HepG2 (cell line): ENCODE measurements at regions of chr2 and their contacts with region 1.

Region 1: GRCh38 chr2:210961249-210961648 is 404.9 kb downstream of the CPS1 start:
- DNase-seq: peak; percentile 58
- ATAC-seq: no peak
- H3K4me3 ChIP-seq: no peak overlapping the region
- H3K27ac ChIP-seq: no peak overlapping the region
- H3K4me1 ChIP-seq: peaks cover 70% of the 10 kb centered on the region
- H3K27me3 ChIP-seq: no peaks in the 10 kb centered on the region
- CTCF ChIP-seq: no peak
- EP300 ChIP-seq: 0 out of 4 replicates have a peak, but pooled peaks of 1 of the 2 experiments have one; percentile 39
- POLR2A ChIP-seq: no peak
- RAD21 ChIP-seq: no peak

Region 2: GRCh38 chr2:210541290-210541902 is 419.9 kb before region 1 on chr2:
- CTCF ChIA-PET with region 1: no interaction called
- POLR2A ChIA-PET with region 1: no interaction called
- in situ Hi-C with region 1: no loop called
- intact Hi-C with region 1: loop called (anchors 10 kb)
- DNase-seq: peak; percentile 95
- ATAC-seq: peak; percentile 97
- H3K4me3 ChIP-seq: peak overlapping the region in 2 of 3 experiments; percentile 32; a peak in 2 of 6 replicates
- H3K27ac ChIP-seq: peak overlapping the region; percentile 80
- H3K4me1 ChIP-seq: peaks cover 63% of the 10 kb centered on the region
- H3K27me3 ChIP-seq: no peaks in the 10 kb centered on the region
- CTCF ChIP-seq: 0 out of 2 replicates have a peak, but pooled peaks have one; percentile 9
- EP300 ChIP-seq: peak; percentile 60 to 98; a peak in 3 of 4 replicates
- POLR2A ChIP-seq: peak in 1 of 2 experiments; percentile 40; a peak in 1 of 4 replicates
- RAD21 ChIP-seq: no peak

Region 3: DNA sequence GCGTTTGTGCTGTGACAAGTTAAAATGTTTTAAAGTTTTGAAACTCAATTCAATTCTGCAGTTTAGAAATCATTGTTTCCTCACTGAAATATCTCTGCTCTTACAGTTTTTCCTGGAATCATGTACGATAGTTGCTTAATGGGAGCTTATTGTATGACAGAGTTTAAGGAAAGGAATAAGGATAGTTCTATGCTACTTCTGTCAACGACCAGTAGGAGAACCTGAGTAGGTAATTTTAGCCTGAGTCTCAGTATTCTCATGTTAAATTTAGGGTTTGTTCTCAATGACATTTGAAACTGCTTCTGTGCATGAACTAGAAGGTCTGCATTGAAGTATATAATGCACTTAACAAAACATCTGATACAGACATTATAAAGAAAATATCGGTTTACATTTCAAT is 43.8 kb before region 1 on chr2:
- CTCF ChIA-PET with region 1: no interaction called
- POLR2A ChIA-PET with region 1: no interaction called
- in situ Hi-C with region 1: no loop called
- intact Hi-C with region 1: loop called (anchors 2 kb)
- DNase-seq: no peak
- ATAC-seq: no peak
- H3K4me3 ChIP-seq: no peak overlapping the region
- H3K27ac ChIP-seq: no peak overlapping the region
- H3K4me1 ChIP-seq: peaks cover 22% of the 10 kb centered on the region
- H3K27me3 ChIP-seq: no peaks in the 10 kb centered on the region
- CTCF ChIP-seq: no peak
- EP300 ChIP-seq: no peak
- POLR2A ChIP-seq: no peak
- RAD21 ChIP-seq: no peak

Region 4: GRCh38 chr2:211014376-211014775 is 53.1 kb after region 1 on chr2:
- CTCF ChIA-PET with region 1: no interaction called
- POLR2A ChIA-PET with region 1: no interaction called
- in situ Hi-C with region 1: no loop called
- intact Hi-C with region 1: loop called (anchors 5 kb)
- DNase-seq: peak; percentile 86
- ATAC-seq: peak; percentile 99
- H3K4me3 ChIP-seq: peak overlapping the region in 1 of 3 experiments; percentile 2; a peak in 1 of 6 replicates
- H3K27ac ChIP-seq: peak overlapping the region; percentile 6
- H3K4me1 ChIP-seq: peaks cover 19% of the 10 kb centered on the region
- H3K27me3 ChIP-seq: no peaks in the 10 kb centered on the region
- CTCF ChIP-seq: no peak
- EP300 ChIP-seq: peak in 1 of 2 experiments; percentile 15; a peak in 1 of 4 replicates
- POLR2A ChIP-seq: no peak
- RAD21 ChIP-seq: no peak